ENCODE measurements at regions of chr5 and their contacts with region 1.

Region 1: GRCh38 chr5:133610489-133611356 is 1.6 kb downstream of the FSTL4 start:
- DNase-seq: peak; percentile 71 to 87
- H3K4me3 ChIP-seq: peak overlapping the region; percentile 22
- H3K4me3 Mint-ChIP-seq: peak overlapping the region; percentile 51
- H3K27ac Mint-ChIP-seq: no peak overlapping the region
- H3K4me1 ChIP-seq: peaks cover 14% of the 10 kb centered on the region
- H3K4me1 Mint-ChIP-seq: no peaks in the 10 kb centered on the region
- H3K27me3 ChIP-seq: peaks cover 4% of the 10 kb centered on the region
- H3K27me3 Mint-ChIP-seq: peaks cover 26% of the 10 kb centered on the region
- CTCF ChIP-seq: peak; percentile 51 to 86

Region 2: GRCh38 chr5:133086366-133086875 is 524.3 kb before region 1 on chr5:
- CTCF ChIA-PET with region 1: no interaction called
- POLR2A ChIA-PET with region 1: no interaction called
- intact Hi-C with region 1: no loop called
- DNase-seq: no peak
- H3K4me3 ChIP-seq: no peak overlapping the region
- H3K4me3 Mint-ChIP-seq: no peak overlapping the region
- H3K27ac Mint-ChIP-seq: no peak overlapping the region
- H3K4me1 ChIP-seq: no peaks in the 10 kb centered on the region
- H3K4me1 Mint-ChIP-seq: peaks cover 7% of the 10 kb centered on the region
- H3K27me3 ChIP-seq: no peaks in the 10 kb centered on the region
- H3K27me3 Mint-ChIP-seq: no peaks in the 10 kb centered on the region
- CTCF ChIP-seq: no peak

Region 3: DNA sequence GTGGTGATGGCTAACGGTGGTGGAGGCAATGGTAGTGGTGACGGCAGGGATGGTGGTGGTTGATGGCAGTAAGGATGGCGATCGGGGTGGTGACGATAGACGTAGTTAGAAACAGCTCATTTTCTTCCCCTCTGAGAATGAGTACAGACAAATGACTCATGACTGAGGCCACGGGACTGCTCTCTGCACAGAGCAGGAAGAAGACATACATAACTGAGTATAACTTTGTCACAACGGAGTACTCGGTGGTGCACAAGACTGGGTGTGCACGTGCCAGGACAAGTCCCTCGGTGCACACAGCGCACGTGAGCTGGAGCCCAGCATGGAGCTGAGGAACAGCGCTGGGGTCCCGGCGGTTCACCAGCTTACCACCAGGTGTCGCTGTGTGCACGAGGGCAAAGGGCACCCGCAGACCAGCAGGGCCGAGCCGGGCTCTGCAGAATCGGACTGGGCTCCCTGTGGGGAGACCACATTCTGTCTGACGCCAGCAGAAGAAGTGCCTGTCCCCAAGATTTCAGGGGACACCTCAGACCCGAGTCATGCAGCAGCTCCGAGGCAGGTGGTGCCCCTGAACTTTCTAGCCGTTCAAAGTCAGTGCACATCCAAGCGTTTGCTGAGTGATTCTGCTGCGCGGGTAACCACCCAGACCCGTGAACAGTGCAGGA is 187.0 kb before region 1 on chr5:
- CTCF ChIA-PET with region 1: interaction called, 17 read pairs
- POLR2A ChIA-PET with region 1: no interaction called
- intact Hi-C with region 1: loop called (anchors 1 kb)
- DNase-seq: peak; percentile 73 to 87
- H3K4me3 ChIP-seq: no peak overlapping the region
- H3K4me3 Mint-ChIP-seq: peak overlapping the region; percentile 17
- H3K27ac Mint-ChIP-seq: no peak overlapping the region
- H3K4me1 ChIP-seq: 0 out of 2 replicates have a peak, but pooled peaks cover 6% of the 10 kb centered on the region
- H3K4me1 Mint-ChIP-seq: peaks cover 9% of the 10 kb centered on the region
- H3K27me3 ChIP-seq: no peaks in the 10 kb centered on the region
- H3K27me3 Mint-ChIP-seq: peaks cover 8% of the 10 kb centered on the region
- CTCF ChIP-seq: peak; percentile 91 to 94

Region 4: GRCh38 chr5:133489632-133490031 is 121.1 kb before region 1 on chr5:
- CTCF ChIA-PET with region 1: interaction called, 3 read pairs
- POLR2A ChIA-PET with region 1: no interaction called
- intact Hi-C with region 1: loop called (anchors 1 kb)
- DNase-seq: peak in 1 of 2 experiments; percentile 41
- H3K4me3 ChIP-seq: no peak overlapping the region
- H3K4me3 Mint-ChIP-seq: no peak overlapping the region
- H3K27ac Mint-ChIP-seq: no peak overlapping the region
- H3K4me1 ChIP-seq: no peaks in the 10 kb centered on the region
- H3K4me1 Mint-ChIP-seq: no peaks in the 10 kb centered on the region
- H3K27me3 ChIP-seq: no peaks in the 10 kb centered on the region
- H3K27me3 Mint-ChIP-seq: peaks cover 7% of the 10 kb centered on the region
- CTCF ChIP-seq: peak; percentile 23 to 45

Region 5: GRCh38 chr5:133499895-133500294 is 110.8 kb before region 1 on chr5:
- CTCF ChIA-PET with region 1: no interaction called
- POLR2A ChIA-PET with region 1: no interaction called
- intact Hi-C with region 1: loop called (anchors 5 kb)
- DNase-seq: no peak
- H3K4me3 ChIP-seq: no peak overlapping the region
- H3K4me3 Mint-ChIP-seq: no peak overlapping the region
- H3K27ac Mint-ChIP-seq: no peak overlapping the region
- H3K4me1 ChIP-seq: no peaks in the 10 kb centered on the region
- H3K4me1 Mint-ChIP-seq: no peaks in the 10 kb centered on the region
- H3K27me3 ChIP-seq: no peaks in the 10 kb centered on the region
- H3K27me3 Mint-ChIP-seq: peaks cover 12% of the 10 kb centered on the region
- CTCF ChIP-seq: no peak

Region 6: GRCh38 chr5:133552931-133553525 is 57.7 kb before region 1 on chr5:
- CTCF ChIA-PET with region 1: no interaction called
- POLR2A ChIA-PET with region 1: no interaction called
- intact Hi-C with region 1: loop called (anchors 1 kb)
- DNase-seq: peak; percentile 62 to 74
- H3K4me3 ChIP-seq: no peak overlapping the region
- H3K4me3 Mint-ChIP-seq: no peak overlapping the region
- H3K27ac Mint-ChIP-seq: no peak overlapping the region
- H3K4me1 ChIP-seq: no peaks in the 10 kb centered on the region
- H3K4me1 Mint-ChIP-seq: no peaks in the 10 kb centered on the region
- H3K27me3 ChIP-seq: no peaks in the 10 kb centered on the region; the same call in 1 of the 2 replicates
- H3K27me3 Mint-ChIP-seq: peaks cover 12% of the 10 kb centered on the region
- CTCF ChIP-seq: peak; percentile 78 to 79

Region 7: GRCh38 chr5:133565993-133566392 is 44.7 kb before region 1 on chr5:
- CTCF ChIA-PET with region 1: no interaction called
- POLR2A ChIA-PET with region 1: no interaction called
- intact Hi-C with region 1: loop called (anchors 1 kb)
- DNase-seq: peak in 1 of 2 experiments; percentile 63
- H3K4me3 ChIP-seq: no peak overlapping the region
- H3K4me3 Mint-ChIP-seq: no peak overlapping the region
- H3K27ac Mint-ChIP-seq: no peak overlapping the region
- H3K4me1 ChIP-seq: no peaks in the 10 kb centered on the region
- H3K4me1 Mint-ChIP-seq: no peaks in the 10 kb centered on the region
- H3K27me3 ChIP-seq: 0 out of 2 replicates have a peak, but pooled peaks cover 1% of the 10 kb centered on the region
- H3K27me3 Mint-ChIP-seq: peaks cover 10% of the 10 kb centered on the region
- CTCF ChIP-seq: no peak

Measured in Caco-2 (cell line).